ENCODE measurements at regions of chr2 and their contacts with region 1.

Region 1: DNA sequence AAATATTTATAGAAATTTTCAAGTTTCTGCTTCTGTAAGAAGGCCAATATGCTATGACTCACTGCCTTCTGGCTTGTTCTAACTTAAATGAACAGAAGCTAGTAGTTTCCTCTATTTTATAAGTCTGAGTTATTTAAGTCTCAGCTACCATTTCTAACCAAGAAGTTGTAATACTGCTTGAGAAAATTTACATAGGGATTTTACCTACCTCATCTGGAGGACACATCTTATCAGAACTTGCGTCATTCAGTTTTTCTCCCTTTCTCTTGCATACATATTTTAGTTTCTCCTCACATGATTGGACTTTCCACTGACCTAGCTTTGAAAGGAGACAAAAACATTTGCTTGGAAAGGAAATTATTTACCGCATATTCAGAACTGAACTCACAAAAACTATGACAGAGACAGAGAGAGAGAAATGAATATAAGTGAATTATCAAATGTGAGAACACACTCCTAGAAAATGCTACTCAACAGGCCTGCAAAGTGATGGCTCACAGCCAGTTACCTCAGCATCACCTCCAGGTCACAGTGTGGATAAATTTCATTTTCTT is 81.1 kb upstream of the CD302 start:
- DNase-seq: peak; percentile 62
- ATAC-seq: peak; percentile 90
- H3K4me3 ChIP-seq: no peak overlapping the region
- H3K4me3 Mint-ChIP-seq: peak overlapping the region; percentile 69
- H3K27ac ChIP-seq: peak overlapping the region; percentile 59 to 61
- H3K27ac Mint-ChIP-seq: peak overlapping the region; percentile 84
- H3K4me1 ChIP-seq: peaks cover 0 to 11% of the 10 kb centered on the region in 2 donors
- H3K4me1 Mint-ChIP-seq: peaks cover 24% of the 10 kb centered on the region
- H3K27me3 ChIP-seq: no peaks in the 10 kb centered on the region
- H3K27me3 Mint-ChIP-seq: no peaks in the 10 kb centered on the region
- CTCF ChIP-seq: no peak

Region 2: GRCh38 chr2:159895258-159896065 is 16.3 kb after region 1 on chr2:
- CTCF ChIA-PET with region 1: no interaction called
- POLR2A ChIA-PET with region 1: interaction called, 9 read pairs
- intact Hi-C with region 1: loop called (anchors 2 kb)
- DNase-seq: peak; percentile 40
- ATAC-seq: peak; percentile 75
- H3K4me3 ChIP-seq: no peak overlapping the region
- H3K4me3 Mint-ChIP-seq: peak overlapping the region; percentile 33
- H3K27ac ChIP-seq: peak overlapping the region in 1 of 2 donors; percentile 53
- H3K27ac Mint-ChIP-seq: peak overlapping the region; percentile 72
- H3K4me1 ChIP-seq: peaks cover 17 to 19% of the 10 kb centered on the region in 2 donors
- H3K4me1 Mint-ChIP-seq: peaks cover 69% of the 10 kb centered on the region
- H3K27me3 ChIP-seq: no peaks in the 10 kb centered on the region
- H3K27me3 Mint-ChIP-seq: no peaks in the 10 kb centered on the region
- CTCF ChIP-seq: no peak

Region 3: GRCh38 chr2:159904127-159904958 is 25.2 kb after region 1 on chr2:
- CTCF ChIA-PET with region 1: no interaction called
- POLR2A ChIA-PET with region 1: interaction called, 4 read pairs
- intact Hi-C with region 1: loop called (anchors 1 kb)
- DNase-seq: peak; percentile 90
- ATAC-seq: peak; percentile 85
- H3K4me3 ChIP-seq: peak within 1 kb of the TSS; percentile 69 to 96 (median 79)
- H3K4me3 Mint-ChIP-seq: peak within 1 kb of the TSS; percentile 100
- H3K27ac ChIP-seq: peak within 1 kb of the TSS; percentile 85 to 87
- H3K27ac Mint-ChIP-seq: peak within 1 kb of the TSS; percentile 99
- H3K4me1 ChIP-seq: peaks cover 7 to 26% of the 10 kb centered on the region in 2 donors
- H3K4me1 Mint-ChIP-seq: peaks cover 41% of the 10 kb centered on the region
- H3K27me3 ChIP-seq: no peaks in the 10 kb centered on the region
- H3K27me3 Mint-ChIP-seq: no peaks in the 10 kb centered on the region
- CTCF ChIP-seq: no peak

Region 4: DNA sequence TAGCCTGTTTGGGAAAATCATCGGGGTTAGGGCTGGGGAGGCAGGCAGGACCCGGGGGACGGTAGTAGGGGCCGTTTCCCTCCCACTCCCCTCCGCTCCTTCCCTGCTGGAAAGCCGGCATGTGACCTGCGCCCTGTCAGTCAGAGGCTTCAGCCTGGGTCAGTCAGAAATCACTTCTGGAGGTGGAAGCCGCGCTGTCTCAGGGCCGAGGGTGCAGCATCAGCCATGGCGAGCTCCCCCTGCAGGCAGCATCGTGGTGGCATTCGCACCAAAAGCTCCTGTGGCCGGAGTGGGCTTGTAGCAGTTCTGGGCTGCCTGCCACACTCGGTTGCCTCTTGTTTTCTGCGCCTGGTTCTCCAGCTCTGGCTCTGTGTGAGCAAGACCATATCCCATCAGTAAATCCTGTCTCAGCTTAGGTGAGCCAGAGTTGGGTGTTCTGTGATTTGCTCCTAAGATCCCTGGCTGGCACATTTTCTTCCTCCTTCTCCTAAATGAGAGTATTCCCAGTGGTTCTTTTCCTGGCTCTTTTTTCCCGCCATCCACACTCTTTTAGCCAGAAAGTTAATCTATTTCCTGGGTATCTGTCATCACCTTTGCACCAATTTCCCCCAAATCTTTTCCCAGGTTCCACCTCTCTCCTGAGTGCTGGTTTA is 42.8 kb after region 1 on chr2:
- CTCF ChIA-PET with region 1: interaction called, 3 read pairs
- POLR2A ChIA-PET with region 1: no interaction called
- intact Hi-C with region 1: loop called (anchors 2 kb)
- DNase-seq: peak; percentile 75
- ATAC-seq: peak; percentile 96
- H3K4me3 ChIP-seq: no peak overlapping the region
- H3K4me3 Mint-ChIP-seq: no peak overlapping the region
- H3K27ac ChIP-seq: no peak overlapping the region
- H3K27ac Mint-ChIP-seq: no peak overlapping the region
- H3K4me1 ChIP-seq: peaks cover 0 to 9% of the 10 kb centered on the region in 2 donors
- H3K4me1 Mint-ChIP-seq: peaks cover 12% of the 10 kb centered on the region
- H3K27me3 ChIP-seq: no peaks in the 10 kb centered on the region
- H3K27me3 Mint-ChIP-seq: peaks cover 3% of the 10 kb centered on the region
- CTCF ChIP-seq: peak; percentile 82

Region 5: DNA sequence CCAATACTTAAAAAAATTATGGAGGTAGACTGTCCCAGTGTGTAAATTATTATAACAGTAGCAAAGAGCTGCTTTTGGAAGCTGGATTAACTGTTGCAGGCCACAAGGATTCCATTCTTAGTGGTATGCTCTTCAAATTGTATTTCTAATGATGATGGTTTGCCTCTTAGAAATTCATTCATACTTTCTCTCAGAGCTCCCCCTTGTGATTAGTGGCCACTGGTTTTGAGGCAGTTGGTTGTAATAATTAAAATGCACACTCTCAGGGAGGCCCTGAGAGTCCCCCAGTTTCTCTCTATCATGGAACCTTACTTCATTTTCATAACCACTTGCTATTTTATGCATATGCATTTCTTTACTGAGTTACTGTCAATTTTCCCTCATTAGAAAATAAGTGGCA is 60.8 kb after region 1 on chr2:
- CTCF ChIA-PET with region 1: interaction called, 3 read pairs
- POLR2A ChIA-PET with region 1: no interaction called
- intact Hi-C with region 1: loop called (anchors 5 kb)
- DNase-seq: peak; percentile 33
- ATAC-seq: peak; percentile 39
- H3K4me3 ChIP-seq: no peak overlapping the region
- H3K4me3 Mint-ChIP-seq: no peak overlapping the region
- H3K27ac ChIP-seq: no peak overlapping the region
- H3K27ac Mint-ChIP-seq: no peak overlapping the region
- H3K4me1 ChIP-seq: no peaks in the 10 kb centered on the region
- H3K4me1 Mint-ChIP-seq: peaks cover 3% of the 10 kb centered on the region
- H3K27me3 ChIP-seq: no peaks in the 10 kb centered on the region
- H3K27me3 Mint-ChIP-seq: no peaks in the 10 kb centered on the region
- CTCF ChIP-seq: peak; percentile 9

Measured in B cell (primary cell).